ENCODE measurements at regions of chr1 and their contacts with region 1.

Region 1: GRCh38 chr1:44739361-44740178 is at the start of gene KIF2C:
- DNase-seq: peak; percentile 87 to 96 (median 94)
- ATAC-seq: peak; percentile 100
- H3K4me3 ChIP-seq: peak within 1 kb of the TSS; percentile 79
- H3K4me3 Mint-ChIP-seq: peak within 1 kb of the TSS; percentile 84 to 99 (median 94)
- H3K27ac ChIP-seq: peak within 1 kb of the TSS; percentile 84
- H3K27ac Mint-ChIP-seq: peak within 1 kb of the TSS; percentile 86 to 97 (median 95)
- H3K4me1 ChIP-seq: peaks cover 5 to 7% of the 10 kb centered on the region in 2 donors
- H3K4me1 Mint-ChIP-seq: peaks cover 9 to 39% (median 19%) of the 10 kb centered on the region in 7 donors
- H3K27me3 ChIP-seq: no peaks in the 10 kb centered on the region
- H3K27me3 Mint-ChIP-seq: no peaks in the 10 kb centered on the region
- total RNA-seq, gene KIF2C: 0.32 to 69.3 (median 1.1) TPM

Region 2: DNA sequence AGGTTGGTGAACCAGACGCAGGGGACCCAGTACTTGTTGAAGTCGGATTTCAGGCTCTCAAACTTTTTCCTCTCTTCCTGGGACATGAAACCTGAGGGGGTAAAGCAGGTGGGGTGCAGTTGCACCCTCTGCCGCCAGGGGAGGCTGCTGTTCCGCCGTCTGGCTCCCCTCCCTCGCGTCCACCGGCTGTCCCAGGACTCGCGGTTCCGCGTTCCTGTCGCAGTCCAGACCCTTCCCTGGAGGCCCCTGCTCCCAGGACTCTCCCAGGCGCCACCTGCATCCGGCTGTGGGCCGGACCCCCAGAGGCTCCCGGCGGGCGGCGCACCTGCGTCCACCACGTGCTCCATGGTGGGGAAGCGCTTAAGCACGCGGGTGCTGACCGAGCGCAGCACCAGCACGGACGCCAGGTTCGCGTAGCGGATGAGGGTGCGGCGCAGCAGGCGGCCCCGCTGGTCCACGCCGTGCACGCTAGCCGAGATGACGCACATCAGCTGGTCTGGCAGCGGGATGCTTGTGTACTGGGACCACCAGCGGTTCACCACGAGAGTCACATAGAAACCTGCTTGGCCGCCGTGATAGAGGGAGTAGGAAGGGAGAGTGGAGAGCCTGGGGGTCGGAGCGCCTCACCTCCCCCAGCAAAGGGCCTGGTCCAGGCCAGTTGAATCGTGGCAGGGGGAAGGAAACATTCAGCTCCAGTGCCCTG is 46.7 kb after region 1 on chr1:
- CTCF ChIA-PET with region 1: interaction called, 4 read pairs
- POLR2A ChIA-PET with region 1: no interaction called
- intact Hi-C with region 1: loop called in 1 of 2 experiments (anchors 2 kb)
- DNase-seq: peak; percentile 69 to 85 (median 76)
- ATAC-seq: peak; percentile 90
- H3K4me3 ChIP-seq: peak overlapping the region; percentile 64
- H3K4me3 Mint-ChIP-seq: peak overlapping the region; percentile 60 to 82 (median 75)
- H3K27ac ChIP-seq: peak overlapping the region; percentile 58
- H3K27ac Mint-ChIP-seq: peak overlapping the region in 8 of 9 donors; percentile 51 to 80 (median 72)
- H3K4me1 ChIP-seq: peaks cover 20 to 25% of the 10 kb centered on the region in 2 donors
- H3K4me1 Mint-ChIP-seq: peaks cover 13 to 35% (median 27%) of the 10 kb centered on the region in 7 donors
- H3K27me3 ChIP-seq: no peaks in the 10 kb centered on the region
- H3K27me3 Mint-ChIP-seq: no peaks in the 10 kb centered on the region

Region 3: GRCh38 chr1:44985747-44986359 is 246.3 kb after region 1 on chr1:
- CTCF ChIA-PET with region 1: no interaction called
- POLR2A ChIA-PET with region 1: no interaction called
- intact Hi-C with region 1: loop called in 1 of 2 experiments (anchors 1 kb)
- DNase-seq: no peak
- ATAC-seq: no peak
- H3K4me3 ChIP-seq: peak overlapping the region; percentile 77
- H3K4me3 Mint-ChIP-seq: peak overlapping the region; percentile 90 to 100 (median 98)
- H3K27ac ChIP-seq: peak overlapping the region; percentile 68
- H3K27ac Mint-ChIP-seq: peak overlapping the region; percentile 75 to 99 (median 92)
- H3K4me1 ChIP-seq: peaks cover 8 to 13% of the 10 kb centered on the region in 2 donors
- H3K4me1 Mint-ChIP-seq: peaks cover 7 to 39% (median 23%) of the 10 kb centered on the region in 7 donors
- H3K27me3 ChIP-seq: no peaks in the 10 kb centered on the region
- H3K27me3 Mint-ChIP-seq: no peaks in the 10 kb centered on the region